ENCODE measurements at regions of chr1 and their contacts with region 1.

Region 1: GRCh38 chr1:220776720-220777326 is 9.9 kb upstream of the MTARC1 start:
- DNase-seq: peak; percentile 78 to 82
- H3K4me3 ChIP-seq: no peak overlapping the region
- H3K27ac ChIP-seq: no peak overlapping the region
- H3K4me1 ChIP-seq: peaks cover 0 to 3% (median 0%) of the 10 kb centered on the region in 4 donors
- H3K27me3 ChIP-seq: no peaks in the 10 kb centered on the region
- CTCF ChIP-seq: peak; percentile 83 to 87

Region 2: DNA sequence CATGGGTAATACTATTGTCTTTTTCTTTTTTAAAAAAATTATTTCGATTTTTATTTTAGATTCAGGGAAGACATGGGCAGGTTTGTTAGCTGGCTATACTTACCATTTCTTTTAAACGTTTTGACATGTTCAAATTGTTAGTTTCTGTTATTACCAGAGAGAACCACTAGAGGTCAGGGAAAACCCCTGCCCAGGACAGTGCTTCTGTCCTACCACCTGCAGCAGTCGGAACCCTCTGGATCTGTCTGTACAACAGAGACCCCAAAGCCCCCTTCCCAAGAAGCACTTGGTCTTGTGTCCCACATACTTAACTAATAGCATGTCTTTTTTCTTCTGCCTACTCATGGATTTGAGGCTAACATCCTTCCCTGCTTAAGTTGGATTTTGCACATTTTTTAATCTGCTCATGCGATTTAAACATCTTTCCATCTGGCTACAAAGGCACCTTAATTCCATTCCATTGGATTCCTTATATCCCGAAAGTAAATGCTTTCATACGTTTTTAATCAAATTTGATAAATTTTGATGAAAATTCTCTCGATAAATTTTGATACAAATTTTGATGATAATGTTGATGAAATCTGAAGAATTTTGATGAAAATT is 96.6 kb before region 1 on chr1:
- intact Hi-C with region 1: loop called (anchors 5 kb)
- DNase-seq: no peak
- H3K4me3 ChIP-seq: no peak overlapping the region
- H3K27ac ChIP-seq: no peak overlapping the region
- H3K4me1 ChIP-seq: peaks cover 0 to 3% (median 0%) of the 10 kb centered on the region in 4 donors
- H3K27me3 ChIP-seq: no peaks in the 10 kb centered on the region
- CTCF ChIP-seq: peak; percentile 72 to 81